Esophagus muscularis mucosa (tissue), 4 donors: ENCODE measurements at regions of chr10 and their contacts with region 1.

Region 1: DNA sequence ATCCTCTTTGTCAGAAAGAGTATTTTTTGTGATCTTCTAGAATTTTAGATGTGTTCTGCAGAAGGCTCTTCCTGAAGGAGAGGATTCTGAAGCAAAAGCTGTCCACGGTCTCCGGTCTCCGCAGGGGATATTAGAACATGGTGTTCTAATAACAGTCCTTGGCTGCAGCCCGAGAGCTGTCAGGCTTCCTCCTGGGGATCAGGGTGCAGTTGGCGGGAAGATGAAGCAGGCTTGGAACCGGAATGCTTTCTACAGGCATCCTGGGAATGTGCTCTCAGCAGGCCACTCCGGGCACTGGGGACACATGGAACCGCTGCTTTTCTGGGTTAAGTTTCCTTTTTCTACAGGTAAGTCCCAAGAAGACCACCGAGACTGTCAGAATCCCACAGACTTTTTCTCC is 118.6 kb upstream of the PARD3 start:
- DNase-seq: peak; percentile 93
- H3K4me3 ChIP-seq: peak overlapping the region in 2 of 4 donors; percentile 15 to 24
- H3K27ac ChIP-seq: peak overlapping the region; percentile 74 to 87 (median 84)
- H3K4me1 ChIP-seq: peaks cover 12 to 31% (median 27%) of the 10 kb centered on the region in 4 donors
- H3K27me3 ChIP-seq: no peaks in the 10 kb centered on the region
- CTCF ChIP-seq: no peak
- EP300 ChIP-seq: peak; percentile 55
- POLR2A ChIP-seq: no peak

Region 2: DNA sequence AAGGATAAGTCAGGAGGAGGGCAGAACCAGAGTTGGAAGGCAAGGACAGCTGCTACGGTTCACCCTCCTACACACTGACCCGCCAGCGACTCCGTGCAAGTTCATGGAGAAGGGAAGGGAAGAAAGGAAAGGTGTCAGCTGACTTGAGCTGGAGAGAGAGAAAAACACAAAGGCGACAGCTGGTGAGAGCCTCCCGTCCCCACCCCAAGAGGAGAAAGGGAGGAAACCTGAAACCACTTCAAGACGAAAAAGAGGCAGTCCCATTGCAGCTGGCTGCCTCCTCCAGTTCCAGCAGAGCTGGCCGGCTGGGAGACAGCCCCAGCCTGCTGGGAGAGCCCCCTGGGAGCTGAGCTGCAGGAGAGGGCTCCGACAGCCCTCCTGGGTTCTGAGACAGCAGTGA is 193.8 kb before region 1 on chr10:
- intact Hi-C with region 1: loop called (anchors 10 kb)
- DNase-seq: peak; percentile 74
- H3K4me3 ChIP-seq: peak overlapping the region; percentile 12 to 36 (median 24)
- H3K27ac ChIP-seq: peak overlapping the region; percentile 73 to 76 (median 74)
- H3K4me1 ChIP-seq: peaks cover 24 to 96% (median 79%) of the 10 kb centered on the region in 4 donors
- H3K27me3 ChIP-seq: no peaks in the 10 kb centered on the region
- CTCF ChIP-seq: no peak
- EP300 ChIP-seq: no peak
- POLR2A ChIP-seq: no peak

Region 3: DNA sequence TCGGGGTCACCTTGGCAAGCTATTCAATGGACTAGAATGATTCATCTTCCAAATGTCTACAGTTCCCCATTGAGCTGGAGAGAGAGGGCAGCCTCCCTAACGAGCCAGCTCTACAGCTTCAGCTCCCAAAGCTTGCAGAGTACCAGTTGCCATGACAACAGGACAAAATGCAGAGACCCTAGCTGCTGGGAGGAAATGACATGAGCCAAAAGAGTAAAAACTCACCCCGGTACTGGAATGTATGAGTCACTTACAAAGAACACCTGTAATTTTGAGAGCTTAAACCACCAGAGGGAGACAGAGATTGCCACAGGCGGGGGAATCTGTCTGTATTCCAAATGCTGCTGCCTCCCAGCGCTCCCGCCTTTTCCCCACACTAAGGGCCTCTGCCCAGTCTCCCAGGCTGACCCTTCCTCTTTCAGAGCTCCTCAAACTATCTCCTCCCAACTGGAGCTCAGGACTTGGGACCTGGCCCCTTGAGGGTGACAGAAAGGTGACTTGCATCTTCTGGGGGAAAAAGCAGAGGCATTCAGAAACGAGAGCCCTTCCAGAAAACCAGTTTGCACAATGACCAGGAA is 61.0 kb after region 1 on chr10:
- intact Hi-C with region 1: no loop called
- DNase-seq: no peak
- H3K4me3 ChIP-seq: no peak overlapping the region
- H3K27ac ChIP-seq: no peak overlapping the region
- H3K4me1 ChIP-seq: peaks cover 4 to 9% (median 7%) of the 10 kb centered on the region in 4 donors
- H3K27me3 ChIP-seq: no peaks in the 10 kb centered on the region
- CTCF ChIP-seq: peak; percentile 55 to 69 (median 60)
- EP300 ChIP-seq: no peak
- POLR2A ChIP-seq: no peak